H1 (cell line): ENCODE measurements at regions of chr22 and their contacts with region 1.

Region 1: GRCh38 chr22:29635734-29636357 is 32.4 kb downstream of the NF2 start:
- DNase-seq: no peak
- H3K4me3 ChIP-seq: no peak overlapping the region
- H3K27ac ChIP-seq: no peak overlapping the region
- H3K4me1 ChIP-seq: no peaks in the 10 kb centered on the region
- H3K27me3 ChIP-seq: no peaks in the 10 kb centered on the region
- CTCF ChIP-seq: peak; percentile 23 to 81 (median 71)
- EP300 ChIP-seq: no peak
- POLR2A ChIP-seq: no peak
- RAD21 ChIP-seq: peak; percentile 88 to 91

Region 2: DNA sequence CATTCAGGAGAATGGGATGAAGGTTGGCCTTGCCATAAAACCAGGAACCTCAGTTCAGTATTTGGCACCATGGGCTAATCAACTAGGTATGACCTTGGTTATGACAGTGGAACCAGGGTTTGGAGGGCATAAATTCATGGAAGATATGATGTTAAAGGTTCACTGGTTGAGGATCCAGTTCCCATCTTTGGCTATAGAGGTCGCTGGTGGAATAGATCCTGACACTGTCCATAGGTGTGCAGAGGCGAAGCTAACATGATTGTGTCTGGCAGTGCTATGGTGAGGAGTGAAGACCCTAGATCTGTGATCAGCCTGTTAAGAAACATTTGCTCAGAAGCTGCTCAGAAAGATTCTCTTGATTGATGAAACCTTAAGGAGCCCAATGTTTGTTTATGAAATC is 26.7 kb before region 1 on chr22:
- CTCF ChIA-PET with region 1: interaction called, 11 read pairs
- POLR2A ChIA-PET with region 1: no interaction called
- DNase-seq: no peak
- H3K4me3 ChIP-seq: no peak overlapping the region
- H3K27ac ChIP-seq: no peak overlapping the region
- H3K4me1 ChIP-seq: peaks cover 3 to 10% (median 4%) of the 10 kb centered on the region in 4 experiments; a peak in 5 of 7 replicates
- H3K27me3 ChIP-seq: no peaks in the 10 kb centered on the region
- CTCF ChIP-seq: peak; percentile 16 to 76 (median 52)
- EP300 ChIP-seq: no peak
- POLR2A ChIP-seq: no peak
- RAD21 ChIP-seq: peak; percentile 50 to 54

Region 3: DNA sequence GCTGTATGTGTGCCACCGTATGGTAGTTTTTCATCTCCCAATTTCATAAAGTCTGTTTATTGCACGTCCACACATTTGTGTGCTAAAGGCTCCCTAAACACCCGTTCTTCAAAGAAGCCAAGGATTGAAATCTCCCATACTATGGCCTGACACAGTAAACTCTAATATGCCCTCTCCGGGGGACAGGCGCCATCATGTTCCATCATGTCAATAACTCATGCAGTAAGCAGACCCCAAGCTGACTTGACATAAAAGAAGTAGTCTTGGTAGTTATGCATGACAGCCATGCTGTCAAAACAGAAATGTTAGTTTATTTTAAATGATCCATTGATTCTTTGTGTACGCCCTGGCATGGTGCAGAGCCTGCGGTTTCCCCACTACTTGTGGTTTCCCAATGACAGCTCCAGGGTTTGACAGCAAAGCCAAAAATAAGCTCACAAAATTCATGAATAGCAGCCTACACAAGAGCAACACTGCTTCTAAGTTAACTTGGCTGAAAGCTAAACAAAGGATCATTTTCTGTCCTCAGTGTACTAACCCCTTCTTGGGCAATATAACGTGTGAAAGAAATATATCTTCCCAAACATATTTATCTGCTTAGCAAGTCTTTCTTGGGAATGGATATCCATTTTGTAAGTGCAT is 27.5 kb after region 1 on chr22:
- CTCF ChIA-PET with region 1: interaction called, 10 read pairs
- POLR2A ChIA-PET with region 1: no interaction called
- DNase-seq: no peak
- H3K4me3 ChIP-seq: no peak overlapping the region
- H3K27ac ChIP-seq: no peak overlapping the region
- H3K4me1 ChIP-seq: no peaks in the 10 kb centered on the region
- H3K27me3 ChIP-seq: no peaks in the 10 kb centered on the region
- CTCF ChIP-seq: no peak
- EP300 ChIP-seq: no peak
- POLR2A ChIP-seq: no peak
- RAD21 ChIP-seq: no peak

Region 4: DNA sequence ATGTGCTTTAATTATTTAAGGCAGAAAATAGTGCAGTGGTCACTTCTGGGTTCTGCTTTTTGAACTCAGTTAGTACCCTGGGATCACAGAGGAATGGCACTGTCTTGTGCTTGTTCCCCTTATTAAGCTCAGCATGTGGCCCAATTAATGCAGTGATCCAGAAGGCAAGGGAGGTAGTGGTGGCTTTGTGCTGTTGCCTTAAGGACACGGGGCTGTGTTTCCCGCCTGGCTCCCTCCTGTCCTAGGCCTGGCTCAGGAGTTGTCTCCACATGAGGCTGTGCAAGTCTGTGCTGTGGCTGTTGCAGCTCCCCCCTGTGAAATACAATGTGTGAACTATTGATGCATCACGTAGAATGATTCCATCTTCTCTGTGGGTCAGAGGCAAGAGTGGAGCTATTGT is 34.8 kb after region 1 on chr22:
- CTCF ChIA-PET with region 1: interaction called, 10 read pairs
- POLR2A ChIA-PET with region 1: no interaction called
- DNase-seq: no peak
- H3K4me3 ChIP-seq: no peak overlapping the region
- H3K27ac ChIP-seq: no peak overlapping the region
- H3K4me1 ChIP-seq: peaks cover 0 to 2% (median 0%) of the 10 kb centered on the region in 4 experiments; a peak in 1 of 7 replicates
- H3K27me3 ChIP-seq: no peaks in the 10 kb centered on the region
- CTCF ChIP-seq: no peak
- EP300 ChIP-seq: no peak
- POLR2A ChIP-seq: no peak
- RAD21 ChIP-seq: no peak

Region 5: GRCh38 chr22:30089655-30089974 is 453.8 kb after region 1 on chr22:
- CTCF ChIA-PET with region 1: interaction called, 11 read pairs
- POLR2A ChIA-PET with region 1: no interaction called
- DNase-seq: no peak
- H3K4me3 ChIP-seq: no peak overlapping the region
- H3K27ac ChIP-seq: no peak overlapping the region
- H3K4me1 ChIP-seq: no peaks in the 10 kb centered on the region
- H3K27me3 ChIP-seq: no peaks in the 10 kb centered on the region
- CTCF ChIP-seq: no peak
- EP300 ChIP-seq: no peak
- POLR2A ChIP-seq: no peak
- RAD21 ChIP-seq: no peak